Right ventricle myocardium inferior (tissue), 1 donor: ENCODE measurements at regions of chr14 and their contacts with region 1.

Region 1: GRCh38 chr14:52706724-52707706 is at the start of gene PSMC6:
- DNase-seq: peak; percentile 96
- ATAC-seq: peak; percentile 100
- total RNA-seq, gene PSMC6: 71.7 TPM

Region 2: GRCh38 chr14:52552063-52552988 is 154.7 kb before region 1 on chr14 and contains the starts of genes GPR137C and TXNDC16:
- intact Hi-C with region 1: loop called (anchors 5 kb)
- DNase-seq: peak; percentile 100
- ATAC-seq: peak; percentile 99
- total RNA-seq, gene GPR137C: 0.51 TPM
- total RNA-seq, gene TXNDC16: 3.4 TPM

Region 3: GRCh38 chr14:52729925-52730667 is 23.1 kb after region 1 on chr14 and contains the start of gene STYX:
- intact Hi-C with region 1: loop called (anchors 2 kb)
- DNase-seq: peak; percentile 100
- ATAC-seq: peak; percentile 100
- total RNA-seq, gene STYX: 13.1 TPM

Region 4: GRCh38 chr14:53375599-53375998 is 668.6 kb after region 1 on chr14:
- intact Hi-C with region 1: no loop called
- DNase-seq: no peak
- ATAC-seq: peak; percentile 88